BJ (cell line): ENCODE measurements at regions of chr2 and their contacts with region 1.

Region 1: DNA sequence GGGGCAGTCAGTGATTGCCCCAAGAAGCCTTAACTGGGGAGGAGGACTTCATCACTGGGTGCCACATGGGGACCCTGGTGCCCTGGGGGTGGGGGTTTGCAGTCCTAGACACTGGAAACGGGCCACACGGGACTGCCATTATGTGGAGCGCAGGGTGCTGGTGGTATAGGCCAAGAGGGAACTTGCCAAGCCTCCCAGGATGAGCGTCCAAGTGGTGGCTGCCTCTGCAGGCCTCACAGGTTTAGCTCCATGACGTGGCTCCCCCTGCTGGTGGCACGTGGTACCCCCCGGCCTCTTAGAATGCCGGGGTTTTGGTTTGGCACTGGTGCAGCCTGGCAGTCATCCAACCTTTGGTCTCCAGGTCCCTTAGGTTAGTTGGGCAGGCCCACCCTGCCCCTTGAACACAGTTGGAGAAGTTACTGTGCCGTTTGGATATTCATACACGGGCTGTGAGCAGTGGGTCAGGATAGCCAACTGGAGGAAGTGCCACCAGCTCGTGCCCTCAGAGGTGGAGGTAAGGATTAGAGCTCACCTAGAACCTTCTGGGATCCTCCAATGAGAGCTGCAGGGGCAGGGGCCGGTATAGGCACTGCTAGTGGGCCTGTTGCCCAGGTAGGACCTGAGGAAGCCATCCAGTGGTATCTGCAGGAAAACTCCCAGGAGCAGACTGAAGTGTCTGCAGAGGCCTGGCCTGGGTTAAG is 5.6 kb downstream of the PTMA start:
- DNase-seq: no peak
- H3K4me3 ChIP-seq: no peak overlapping the region
- H3K27me3 ChIP-seq: no peaks in the 10 kb centered on the region
- CTCF ChIP-seq: peak; percentile 94

Region 2: DNA sequence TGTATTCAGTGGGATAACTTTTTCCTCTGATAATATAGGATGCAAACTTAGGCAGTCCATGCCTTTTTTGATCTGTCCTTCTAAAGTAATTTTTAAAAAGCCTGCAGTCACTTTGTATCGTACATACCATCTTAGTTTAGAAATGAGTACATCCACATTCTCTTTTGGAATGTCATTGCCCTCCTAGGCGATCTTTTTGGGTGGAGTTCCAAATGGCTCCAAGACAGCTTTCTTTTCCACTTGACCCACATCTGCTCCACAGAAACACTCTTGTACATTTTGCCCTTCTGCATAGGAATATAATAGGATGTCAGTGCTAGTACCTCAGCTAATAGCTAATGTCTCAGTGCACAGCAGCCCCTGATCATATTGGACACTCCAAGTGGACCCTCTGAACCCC is 567.2 kb before region 1 on chr2:
- CTCF ChIA-PET with region 1: no interaction called
- POLR2A ChIA-PET with region 1: no interaction called
- DNase-seq: peak; percentile 39
- H3K4me3 ChIP-seq: no peak overlapping the region
- H3K27me3 ChIP-seq: no peaks in the 10 kb centered on the region
- CTCF ChIP-seq: no peak

Region 3: DNA sequence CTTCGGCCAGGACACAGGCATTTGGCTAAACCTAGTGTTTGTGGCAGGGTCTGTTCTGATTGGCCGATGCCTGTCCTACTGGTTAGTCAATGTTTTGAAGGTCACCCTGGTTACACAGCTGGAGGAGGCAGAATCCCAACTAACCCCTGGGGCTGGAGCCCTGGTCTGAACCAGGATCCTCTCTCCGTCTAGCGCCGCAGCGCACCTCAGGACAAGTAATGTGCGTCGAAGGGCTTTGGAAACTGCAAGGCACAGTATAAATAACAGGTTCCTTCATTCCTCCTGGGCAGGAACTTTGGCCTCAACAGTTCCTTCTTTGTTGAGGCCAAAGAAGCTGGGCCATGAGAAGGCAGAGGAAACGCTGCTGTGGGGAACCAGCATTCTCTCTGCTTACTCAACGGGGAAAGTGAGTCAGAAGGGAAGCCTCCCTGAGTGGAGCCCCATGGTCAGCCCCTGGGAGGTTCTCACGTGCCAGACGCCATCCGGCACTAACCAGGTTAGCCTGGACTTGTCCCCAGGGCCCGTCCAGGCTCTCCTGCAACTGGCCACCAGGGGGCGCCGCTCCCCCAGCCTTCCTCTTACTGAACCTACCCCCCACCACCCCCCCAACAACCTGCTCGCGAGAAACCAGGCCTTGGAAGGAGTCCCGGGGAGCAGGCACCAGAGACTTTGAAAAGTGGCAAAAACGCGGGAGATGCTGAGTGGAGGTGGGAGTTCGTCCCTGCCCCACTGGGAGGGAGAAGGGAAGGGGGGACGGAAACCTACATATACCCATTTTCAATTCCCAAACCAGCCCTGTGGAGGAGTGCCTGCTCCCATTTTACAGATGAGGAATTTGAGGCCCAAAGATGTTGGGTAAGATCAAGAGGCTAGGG is 101.5 kb before region 1 on chr2:
- CTCF ChIA-PET with region 1: interaction called, 139 read pairs
- POLR2A ChIA-PET with region 1: no interaction called
- DNase-seq: peak; percentile 74
- H3K4me3 ChIP-seq: no peak overlapping the region
- H3K27me3 ChIP-seq: no peaks in the 10 kb centered on the region
- CTCF ChIP-seq: peak; percentile 97

Region 4: GRCh38 chr2:231666171-231667095 is 47.4 kb before region 1 on chr2:
- CTCF ChIA-PET with region 1: interaction called, 719 read pairs
- POLR2A ChIA-PET with region 1: no interaction called
- DNase-seq: peak; percentile 85
- H3K4me3 ChIP-seq: peak overlapping the region; percentile 46
- H3K27me3 ChIP-seq: no peaks in the 10 kb centered on the region
- CTCF ChIP-seq: no peak

Region 5: GRCh38 chr2:231732604-231733003 is 18.7 kb after region 1 on chr2:
- CTCF ChIA-PET with region 1: interaction called, 14 read pairs
- POLR2A ChIA-PET with region 1: interaction called, 5 read pairs
- DNase-seq: no peak
- H3K4me3 ChIP-seq: no peak overlapping the region
- H3K27me3 ChIP-seq: no peaks in the 10 kb centered on the region
- CTCF ChIP-seq: no peak

Region 6: DNA sequence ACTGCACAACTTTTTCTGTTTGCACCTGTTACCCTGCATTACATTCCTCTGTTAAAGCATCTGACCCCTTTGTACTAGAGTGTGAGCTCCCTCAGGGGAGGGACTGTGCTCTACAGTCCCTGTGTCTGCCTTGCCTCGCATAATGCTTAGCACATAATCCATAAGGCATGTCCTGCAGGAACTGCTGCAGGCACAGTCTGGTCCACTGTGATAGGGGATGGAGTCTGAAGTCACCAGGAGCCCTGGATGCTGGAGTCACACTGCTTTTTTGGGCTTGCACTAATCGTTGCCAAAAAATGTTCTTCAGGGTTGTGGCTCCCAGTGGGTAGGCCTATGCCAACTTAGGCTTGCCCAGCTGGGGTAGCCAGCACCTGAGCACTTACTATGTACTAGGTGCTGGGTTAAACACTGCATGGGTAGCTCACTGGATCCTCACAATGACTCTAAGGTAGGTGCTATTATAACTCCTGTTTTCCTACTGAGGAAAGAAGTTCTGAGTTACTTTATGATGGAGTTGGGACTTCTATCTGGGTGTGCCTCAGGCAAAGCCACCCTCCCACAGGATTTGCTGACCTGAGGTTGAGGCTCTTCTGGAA is 105.7 kb after region 1 on chr2:
- CTCF ChIA-PET with region 1: no interaction called
- POLR2A ChIA-PET with region 1: no interaction called
- DNase-seq: no peak
- H3K4me3 ChIP-seq: no peak overlapping the region
- H3K27me3 ChIP-seq: peaks cover 6% of the 10 kb centered on the region; the same call in 1 of the 2 replicates
- CTCF ChIP-seq: no peak

Region 7: GRCh38 chr2:231991664-231992063 is 277.8 kb after region 1 on chr2:
- CTCF ChIA-PET with region 1: no interaction called
- POLR2A ChIA-PET with region 1: no interaction called
- DNase-seq: no peak
- H3K4me3 ChIP-seq: no peak overlapping the region
- H3K27me3 ChIP-seq: no peaks in the 10 kb centered on the region
- CTCF ChIP-seq: no peak